Activated T-helper 2 cell treated with anti-CD3 and anti-CD28 coated beads, Interferon-gamma antibody, Interleukin-2, Interleukin-4, amounts not matched to agents 10 μg/mL and 5 μg/mL and 100 μg/mL, durations not matched to agents 14 hours and 24 hours and 36 hours (primary cell): ENCODE measurements at regions of chr2 and their contacts with region 1.

Region 1: GRCh38 chr2:113167115-113167932 is 6.4 kb upstream of the PSD4 start:
- DNase-seq: no peak
- H3K4me3 Mint-ChIP-seq: peak overlapping the region; percentile 59
- H3K27ac Mint-ChIP-seq: peak overlapping the region; percentile 94
- H3K4me1 Mint-ChIP-seq: peaks cover 59% of the 10 kb centered on the region
- H3K27me3 Mint-ChIP-seq: no peaks in the 10 kb centered on the region

Region 2: DNA sequence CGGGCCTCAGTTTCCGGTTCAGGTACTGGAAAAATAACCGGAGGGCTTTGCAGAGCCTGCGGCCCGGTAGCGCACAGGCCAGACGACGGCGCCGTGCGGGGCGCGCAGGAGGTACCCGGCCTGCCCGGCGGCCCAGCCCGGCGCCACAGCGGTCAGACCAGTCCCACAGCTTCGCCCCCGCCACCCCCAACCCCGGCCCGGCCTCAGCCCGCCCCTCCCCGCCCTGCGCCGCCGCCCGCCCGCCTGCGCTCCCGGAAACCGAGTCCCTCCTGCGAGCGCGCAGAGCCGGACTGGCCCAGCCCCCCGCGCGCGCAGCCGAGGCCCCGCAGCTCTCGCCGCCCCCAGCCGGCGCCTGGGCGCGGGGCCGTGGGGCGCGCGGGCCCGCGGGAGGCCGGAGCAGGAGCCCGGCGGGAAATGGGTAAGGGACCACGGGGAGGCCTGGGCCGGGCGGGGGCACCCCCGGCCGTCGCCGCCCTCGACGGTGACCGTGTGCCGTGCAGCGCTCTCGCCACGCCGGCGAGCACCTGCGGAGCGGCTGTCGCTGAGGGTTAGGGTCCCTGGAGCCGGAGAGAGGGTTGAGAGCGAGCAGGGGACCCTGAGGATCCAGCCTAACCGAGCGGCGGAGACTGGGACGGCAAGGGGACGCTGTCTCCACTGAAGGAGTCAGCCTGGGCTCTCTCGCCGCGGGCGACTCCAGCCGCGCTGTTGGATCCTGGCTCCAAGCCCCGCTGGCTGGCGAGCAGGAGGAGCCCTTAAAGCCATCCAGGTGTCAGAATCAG is 10.0 kb before region 1 on chr2:
- intact Hi-C with region 1: loop called (anchors 1 kb)
- DNase-seq: no peak
- H3K4me3 Mint-ChIP-seq: peak overlapping the region; percentile 84
- H3K27ac Mint-ChIP-seq: peak overlapping the region; percentile 38
- H3K4me1 Mint-ChIP-seq: peaks cover 19% of the 10 kb centered on the region
- H3K27me3 Mint-ChIP-seq: peaks cover 12% of the 10 kb centered on the region